Caco-2 (cell line): ENCODE measurements at regions of chr6 and their contacts with region 1.

Region 1: DNA sequence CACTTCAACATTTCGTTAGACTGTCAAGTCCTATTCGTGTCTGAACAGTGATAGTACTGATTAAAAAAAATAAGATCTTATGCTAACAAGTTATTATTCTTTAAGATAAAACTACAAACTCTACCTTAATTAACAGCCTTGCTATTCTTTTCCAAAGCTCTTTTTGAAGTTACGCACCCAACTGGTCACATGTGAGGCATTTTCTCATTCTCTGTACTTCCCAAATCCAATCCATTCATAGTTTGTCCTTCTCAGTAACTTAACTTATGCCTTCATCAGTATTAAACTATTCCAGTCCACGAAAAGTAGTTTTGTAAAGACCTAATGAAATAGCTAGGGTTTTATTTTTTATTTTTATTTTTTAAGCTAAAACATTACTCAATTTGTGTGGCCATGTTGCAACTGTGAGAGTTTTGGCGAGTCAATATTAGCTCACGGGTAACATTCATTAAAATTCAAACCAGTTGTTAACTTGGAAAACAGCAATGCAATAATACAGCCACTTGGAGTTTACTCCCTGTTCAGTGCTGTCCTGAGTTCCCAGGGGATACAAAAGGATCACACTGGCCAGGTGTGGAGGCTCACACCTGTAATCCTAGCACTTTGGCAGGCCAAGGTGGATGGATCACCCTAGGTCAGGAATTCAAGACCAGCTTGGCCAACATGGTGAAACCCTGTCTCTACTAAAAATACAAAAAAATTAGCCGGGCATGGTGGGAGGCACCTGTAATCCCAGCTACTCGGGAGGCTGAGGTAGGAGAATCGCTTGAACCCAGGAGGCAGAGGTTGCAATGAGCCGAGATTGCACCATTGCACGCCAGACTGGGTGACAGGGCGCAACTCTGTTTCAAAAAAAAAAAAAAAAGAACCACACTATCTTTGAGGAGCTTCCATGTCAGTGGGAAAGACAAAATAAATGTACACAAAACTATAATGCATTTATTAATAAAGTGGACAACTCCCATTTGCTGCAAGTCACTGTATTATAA is 27.9 kb upstream of the EEF1A1 start:
- DNase-seq: no peak
- H3K4me3 ChIP-seq: no peak overlapping the region
- H3K4me3 Mint-ChIP-seq: no peak overlapping the region
- H3K27ac Mint-ChIP-seq: no peak overlapping the region
- H3K4me1 ChIP-seq: 0 out of 2 replicates have a peak, but pooled peaks cover 5% of the 10 kb centered on the region
- H3K4me1 Mint-ChIP-seq: no peaks in the 10 kb centered on the region
- H3K27me3 ChIP-seq: no peaks in the 10 kb centered on the region
- H3K27me3 Mint-ChIP-seq: no peaks in the 10 kb centered on the region
- CTCF ChIP-seq: no peak

Region 2: DNA sequence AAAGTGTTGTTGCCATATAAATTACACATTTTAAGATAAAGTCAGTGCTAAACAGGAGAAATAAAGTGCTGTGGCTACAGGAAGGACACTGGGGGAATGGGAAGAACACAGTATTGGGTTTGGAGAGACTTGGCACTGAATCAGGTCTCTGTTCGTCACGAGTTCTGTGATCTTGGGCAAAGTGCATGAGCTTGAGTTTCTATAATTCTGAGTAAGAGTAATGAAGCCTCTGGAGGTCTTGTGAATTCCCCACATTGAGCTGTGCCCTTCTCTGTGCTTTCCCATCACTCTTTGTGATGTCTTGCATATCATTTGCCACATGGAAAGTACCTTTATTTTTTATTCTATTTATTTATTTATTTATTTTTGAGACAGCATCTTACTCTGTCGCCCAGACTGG is 11.1 kb before region 1 on chr6:
- CTCF ChIA-PET with region 1: no interaction called
- POLR2A ChIA-PET with region 1: no interaction called
- intact Hi-C with region 1: no loop called
- DNase-seq: no peak
- H3K4me3 ChIP-seq: no peak overlapping the region
- H3K4me3 Mint-ChIP-seq: no peak overlapping the region
- H3K27ac Mint-ChIP-seq: no peak overlapping the region
- H3K4me1 ChIP-seq: peaks cover 6% of the 10 kb centered on the region; the same call in 1 of the 2 replicates
- H3K4me1 Mint-ChIP-seq: no peaks in the 10 kb centered on the region
- H3K27me3 ChIP-seq: no peaks in the 10 kb centered on the region
- H3K27me3 Mint-ChIP-seq: no peaks in the 10 kb centered on the region
- CTCF ChIP-seq: no peak

Region 3: GRCh38 chr6:73566954-73567591 is 18.3 kb after region 1 on chr6:
- CTCF ChIA-PET with region 1: no interaction called
- POLR2A ChIA-PET with region 1: interaction called, 10 read pairs
- intact Hi-C with region 1: no loop called
- DNase-seq: peak; percentile 89 to 94
- H3K4me3 ChIP-seq: no peak overlapping the region
- H3K4me3 Mint-ChIP-seq: peak overlapping the region; percentile 66
- H3K27ac Mint-ChIP-seq: peak overlapping the region; percentile 89
- H3K4me1 ChIP-seq: peaks cover 54% of the 10 kb centered on the region
- H3K4me1 Mint-ChIP-seq: peaks cover 21% of the 10 kb centered on the region
- H3K27me3 ChIP-seq: no peaks in the 10 kb centered on the region
- H3K27me3 Mint-ChIP-seq: no peaks in the 10 kb centered on the region
- CTCF ChIP-seq: no peak